ENCODE measurements at regions of chr15 and their contacts with region 1.

Region 1: DNA sequence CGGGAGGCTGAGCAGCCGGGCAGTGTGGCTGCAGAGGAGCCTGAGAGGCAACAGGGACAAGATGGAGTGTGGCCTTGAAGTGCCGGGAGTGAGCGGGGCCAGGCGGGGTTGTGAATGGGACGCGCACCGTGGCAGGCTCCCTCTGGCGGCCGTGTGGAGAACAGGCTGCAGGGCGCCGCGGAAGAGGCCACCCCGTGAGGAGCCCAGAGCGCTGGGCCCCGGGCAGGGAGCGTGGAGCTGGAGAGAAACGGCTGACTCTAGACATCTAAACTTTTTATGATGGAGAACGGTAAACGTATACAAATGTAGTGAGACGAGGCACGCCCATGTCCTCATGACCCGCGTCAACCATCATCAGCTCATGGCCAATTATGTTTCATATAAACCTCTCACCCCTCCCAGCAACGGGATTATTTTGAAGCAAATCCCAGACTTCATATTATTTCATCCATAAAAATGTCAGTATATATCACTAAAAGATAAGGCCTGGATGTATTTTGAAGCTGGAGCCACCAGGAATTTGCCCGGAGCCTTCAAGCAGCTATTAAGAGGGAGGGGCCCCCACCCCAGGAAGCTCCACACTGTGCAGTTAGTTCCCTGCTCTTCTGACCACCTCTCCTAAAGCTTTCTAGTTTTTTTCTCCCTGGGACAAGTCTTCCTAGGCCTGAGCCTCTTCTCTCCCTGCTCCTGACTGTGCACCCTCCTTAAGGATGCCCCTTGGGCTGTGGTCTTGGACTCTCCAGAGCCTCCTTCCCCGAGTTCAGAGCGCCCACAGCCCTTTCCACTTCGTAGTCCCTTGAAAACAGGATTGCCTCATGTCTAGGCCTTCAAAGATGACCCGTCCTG is 149.4 kb downstream of the SMAD6 start:
- DNase-seq: peak; percentile 72
- ATAC-seq: peak; percentile 93
- H3K4me3 ChIP-seq: no peak overlapping the region
- H3K27ac ChIP-seq: no peak overlapping the region
- H3K4me1 ChIP-seq: peaks cover 16% of the 10 kb centered on the region
- H3K27me3 ChIP-seq: no peaks in the 10 kb centered on the region
- CTCF ChIP-seq: peak; percentile 78

Region 2: GRCh38 chr15:66619151-66619903 is 232.1 kb before region 1 on chr15:
- CTCF ChIA-PET with region 1: interaction called, 6 read pairs
- POLR2A ChIA-PET with region 1: no interaction called
- intact Hi-C with region 1: loop called (anchors 5 kb)
- DNase-seq: peak; percentile 80
- ATAC-seq: peak; percentile 72
- H3K4me3 ChIP-seq: no peak overlapping the region
- H3K27ac ChIP-seq: no peak overlapping the region
- H3K4me1 ChIP-seq: peaks cover 19% of the 10 kb centered on the region
- H3K27me3 ChIP-seq: no peaks in the 10 kb centered on the region
- CTCF ChIP-seq: peak; percentile 79

Region 3: GRCh38 chr15:66774001-66774814 is 77.2 kb before region 1 on chr15:
- CTCF ChIA-PET with region 1: no interaction called
- POLR2A ChIA-PET with region 1: no interaction called
- intact Hi-C with region 1: loop called (anchors 5 kb)
- DNase-seq: peak; percentile 88
- ATAC-seq: peak; percentile 87
- H3K4me3 ChIP-seq: no peak overlapping the region
- H3K27ac ChIP-seq: no peak overlapping the region
- H3K4me1 ChIP-seq: peaks cover 34% of the 10 kb centered on the region
- H3K27me3 ChIP-seq: no peaks in the 10 kb centered on the region
- CTCF ChIP-seq: peak; percentile 94

Region 4: GRCh38 chr15:66803182-66803729 is 48.2 kb before region 1 on chr15:
- CTCF ChIA-PET with region 1: no interaction called
- POLR2A ChIA-PET with region 1: no interaction called
- intact Hi-C with region 1: loop called (anchors 5 kb)
- DNase-seq: peak; percentile 97
- ATAC-seq: peak; percentile 97
- H3K4me3 ChIP-seq: peak overlapping the region; percentile 31; the same call in 1 of the 2 replicates
- H3K27ac ChIP-seq: peak overlapping the region; percentile 85
- H3K4me1 ChIP-seq: peaks cover 56% of the 10 kb centered on the region
- H3K27me3 ChIP-seq: no peaks in the 10 kb centered on the region
- CTCF ChIP-seq: no peak

Measured in PC-3 (cell line).